ENCODE measurements at regions of chr3 and their contacts with region 1.

Region 1: DNA sequence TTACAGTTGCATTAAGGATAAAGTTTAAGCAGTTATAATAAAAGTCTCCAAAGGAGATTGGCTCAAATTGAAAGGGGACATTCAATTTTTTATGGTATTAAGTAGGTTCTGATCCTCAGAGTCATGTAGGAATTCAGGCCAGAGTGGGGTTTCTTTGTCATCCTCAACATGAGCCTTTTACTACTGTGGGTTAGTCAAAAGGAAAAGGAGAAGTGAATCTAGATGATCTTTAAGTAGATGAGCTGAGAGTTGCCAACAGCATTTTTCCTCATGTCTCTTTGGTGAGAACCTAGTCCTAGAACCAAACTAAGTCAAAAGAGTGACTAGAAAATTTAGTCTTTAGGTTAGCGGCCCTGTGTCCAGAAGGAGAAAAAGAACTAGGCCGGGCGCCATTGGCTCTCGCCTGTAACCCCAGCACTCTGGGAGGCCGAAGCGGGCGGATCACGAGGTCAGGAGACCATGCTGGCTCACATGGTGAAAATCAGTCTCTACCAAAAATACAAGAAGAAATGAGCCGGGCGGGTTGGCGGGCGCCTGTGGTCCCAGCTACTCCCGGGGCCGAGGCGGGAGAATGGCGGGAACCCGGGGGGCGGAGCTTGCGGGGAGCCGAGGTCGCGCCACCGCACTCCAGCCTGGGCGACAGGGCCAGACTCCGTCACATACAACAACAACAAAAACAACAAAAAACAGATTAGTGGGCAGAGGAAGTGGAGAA is 4.2 kb upstream of the CHL1 start:
- DNase-seq: no peak
- ATAC-seq: no peak

Region 2: GRCh38 chr3:131151-131888 is 61.1 kb before region 1 on chr3:
- intact Hi-C with region 1: loop called in 1 of 2 experiments (anchors 5 kb)
- DNase-seq: peak; percentile 37
- ATAC-seq: peak; percentile 84 to 95

Region 3: GRCh38 chr3:339351-339750 is 147.0 kb after region 1 on chr3:
- intact Hi-C with region 1: no loop called
- DNase-seq: no peak
- ATAC-seq: no peak

Measured in left cardiac atrium (tissue), 4 donors.